Motor neuron (in vitro differentiated cells): ENCODE measurements at regions of chr11 and their contacts with region 1.

Region 1: DNA sequence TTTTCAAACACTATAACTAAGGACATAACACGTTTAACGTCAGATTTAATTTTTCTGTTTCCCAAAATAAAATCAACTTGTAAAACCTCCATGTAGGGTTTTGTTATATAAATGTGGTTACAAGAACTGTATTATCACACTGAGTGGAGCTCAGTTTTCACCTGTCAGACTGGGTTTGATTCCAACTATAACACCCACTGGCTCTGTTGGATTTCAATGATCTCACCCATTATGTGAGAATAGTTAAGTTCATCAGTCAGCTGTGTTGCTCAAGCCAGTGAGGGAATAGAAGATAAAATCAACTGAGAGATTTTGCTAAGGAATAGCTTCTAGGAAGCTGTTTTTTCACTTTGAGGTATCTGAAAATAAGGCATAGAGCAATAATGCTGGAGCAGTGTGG is 5.1 kb upstream of the OR52R1 start:
- ATAC-seq: no peak
- H3K4me3 ChIP-seq: no peak overlapping the region
- H3K27ac ChIP-seq: no peak overlapping the region
- H3K4me1 ChIP-seq: no peaks in the 10 kb centered on the region

Region 2: DNA sequence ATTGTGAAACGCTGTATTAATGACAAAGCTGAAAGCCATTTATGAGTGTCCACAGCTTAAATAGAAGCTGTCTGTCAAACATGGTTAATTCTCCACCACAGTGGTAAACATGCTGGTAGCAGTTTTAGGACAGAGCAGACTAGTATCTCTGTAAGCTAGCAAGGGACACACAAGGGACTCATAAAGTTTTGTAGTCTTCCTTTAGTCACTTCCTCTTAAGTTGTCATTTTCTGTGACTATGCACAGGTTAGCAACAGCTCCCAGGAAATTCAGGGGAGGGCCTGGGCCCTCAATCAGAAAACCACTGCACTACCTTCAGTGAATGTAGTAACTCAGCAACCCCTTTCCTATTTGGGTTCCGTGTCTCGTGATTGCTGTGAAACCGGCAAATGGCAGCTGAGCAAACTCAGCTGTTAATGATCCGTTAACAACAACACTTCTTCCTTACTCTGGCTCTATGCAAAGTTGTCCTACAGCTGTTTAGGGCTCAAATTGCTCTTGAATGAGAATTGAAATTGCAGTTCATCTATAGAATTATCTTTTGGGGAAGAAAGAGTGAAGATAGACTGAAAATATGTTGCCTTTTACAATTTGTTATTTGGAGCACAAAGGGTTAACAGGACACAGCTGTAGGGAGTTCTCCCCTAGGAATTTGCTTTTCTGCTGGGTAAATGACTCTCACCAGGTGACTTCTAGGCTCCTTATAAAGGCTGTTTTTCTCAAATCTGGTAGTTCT is 105.0 kb before region 1 on chr11 and contains the start of gene MMP26:
- in situ Hi-C with region 1: loop called in 1 of 9 experiments (anchors 25 kb)
- ATAC-seq: peak in 4 of 8 experiments; percentile 27 to 90 (median 57)
- H3K4me3 ChIP-seq: no peak within 1 kb of the TSS
- H3K27ac ChIP-seq: no peak within 1 kb of the TSS
- H3K4me1 ChIP-seq: no peaks in the 10 kb centered on the region
- total RNA-seq, gene MMP26: 0.38 TPM in 1 of 8 experiments, not detected in the others